ENCODE measurements at regions of chr17 and their contacts with region 1.

Region 1: DNA sequence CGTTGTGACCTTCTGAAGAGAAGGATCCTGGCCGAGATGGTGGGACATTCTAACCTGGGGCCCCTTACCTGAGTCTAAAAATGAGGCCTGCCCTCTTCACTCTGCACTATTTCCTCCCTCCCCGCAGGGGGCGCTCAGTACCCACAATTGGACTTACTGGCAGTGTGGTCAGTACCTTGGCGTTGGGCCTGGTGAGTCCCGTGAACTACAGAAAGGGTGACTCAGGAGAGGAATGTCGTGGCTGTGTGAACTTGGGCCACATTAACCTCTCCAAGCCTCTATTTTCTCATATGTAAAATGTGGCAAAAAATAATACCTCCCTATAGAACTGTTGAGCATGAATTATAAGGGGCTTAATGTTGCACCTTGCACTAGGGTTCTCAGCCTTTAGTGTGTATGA is 3.9 kb downstream of the RSAD1 start:
- DNase-seq: peak; percentile 97 to 98
- ATAC-seq: peak; percentile 90
- H3K4me3 ChIP-seq: no peak overlapping the region
- H3K27ac ChIP-seq: peak overlapping the region in 1 of 2 donors; percentile 67
- H3K4me1 ChIP-seq: no peaks in the 10 kb centered on the region
- H3K27me3 ChIP-seq: no peaks in the 10 kb centered on the region

Region 2: GRCh38 chr17:50541716-50542688 is 59.5 kb after region 1 on chr17:
- intact Hi-C with region 1: loop called (anchors 5 kb)
- DNase-seq: peak; percentile 89 to 95
- ATAC-seq: peak; percentile 89
- H3K4me3 ChIP-seq: peak overlapping the region; percentile 40 to 42
- H3K27ac ChIP-seq: no peak overlapping the region
- H3K4me1 ChIP-seq: no peaks in the 10 kb centered on the region
- H3K27me3 ChIP-seq: no peaks in the 10 kb centered on the region

Region 3: GRCh38 chr17:50626037-50626574 is 143.6 kb after region 1 on chr17:
- intact Hi-C with region 1: loop called (anchors 2 to 5 kb)
- DNase-seq: peak; percentile 85 to 93
- ATAC-seq: peak; percentile 73
- H3K4me3 ChIP-seq: no peak overlapping the region
- H3K27ac ChIP-seq: no peak overlapping the region
- H3K4me1 ChIP-seq: no peaks in the 10 kb centered on the region
- H3K27me3 ChIP-seq: no peaks in the 10 kb centered on the region

Region 4: DNA sequence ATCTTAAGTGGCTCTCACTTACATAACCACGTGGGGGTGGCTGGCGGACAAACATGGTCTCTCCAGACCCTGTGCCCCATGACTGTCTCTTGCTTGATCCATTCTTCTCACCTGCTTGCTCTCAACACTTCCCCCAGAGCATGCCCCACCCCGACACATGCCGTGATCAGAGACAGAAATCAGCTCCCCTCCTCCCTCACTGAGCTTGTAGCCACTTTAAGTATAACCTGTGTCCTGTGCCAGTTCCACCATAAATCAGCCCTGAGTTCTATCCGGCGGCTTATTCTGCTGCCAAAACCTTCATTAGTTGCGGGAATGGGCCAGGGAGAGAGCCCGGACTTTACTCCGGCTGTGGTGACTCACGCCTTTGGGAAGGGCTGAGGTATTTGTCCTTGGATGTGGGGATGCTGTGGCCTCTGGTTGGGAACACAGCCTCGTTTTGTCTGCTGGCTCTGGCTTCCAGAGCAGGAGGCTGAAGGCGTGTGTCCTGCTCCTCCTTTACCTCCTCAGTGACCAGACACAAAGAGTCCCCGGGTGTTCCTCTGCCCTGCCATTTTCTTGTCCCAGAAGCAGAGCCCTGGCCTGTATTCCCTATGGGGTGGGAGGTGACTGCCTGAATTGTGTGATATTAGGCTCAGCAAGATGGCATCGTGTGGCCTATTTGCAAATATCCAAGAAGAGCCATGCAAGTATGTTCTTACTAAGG is 204.1 kb after region 1 on chr17:
- intact Hi-C with region 1: loop called (anchors 5 kb)
- DNase-seq: peak; percentile 89 to 92
- ATAC-seq: peak; percentile 88
- H3K4me3 ChIP-seq: no peak overlapping the region
- H3K27ac ChIP-seq: peak overlapping the region; percentile 71 to 94
- H3K4me1 ChIP-seq: no peaks in the 10 kb centered on the region
- H3K27me3 ChIP-seq: no peaks in the 10 kb centered on the region

Region 5: GRCh38 chr17:50841949-50842354 is 359.4 kb after region 1 on chr17:
- intact Hi-C with region 1: loop called in 1 of 2 experiments (anchors 5 kb)
- DNase-seq: peak; percentile 71 to 91
- ATAC-seq: peak; percentile 79
- H3K4me3 ChIP-seq: no peak overlapping the region
- H3K27ac ChIP-seq: no peak overlapping the region
- H3K4me1 ChIP-seq: no peaks in the 10 kb centered on the region
- H3K27me3 ChIP-seq: no peaks in the 10 kb centered on the region

Region 6: DNA sequence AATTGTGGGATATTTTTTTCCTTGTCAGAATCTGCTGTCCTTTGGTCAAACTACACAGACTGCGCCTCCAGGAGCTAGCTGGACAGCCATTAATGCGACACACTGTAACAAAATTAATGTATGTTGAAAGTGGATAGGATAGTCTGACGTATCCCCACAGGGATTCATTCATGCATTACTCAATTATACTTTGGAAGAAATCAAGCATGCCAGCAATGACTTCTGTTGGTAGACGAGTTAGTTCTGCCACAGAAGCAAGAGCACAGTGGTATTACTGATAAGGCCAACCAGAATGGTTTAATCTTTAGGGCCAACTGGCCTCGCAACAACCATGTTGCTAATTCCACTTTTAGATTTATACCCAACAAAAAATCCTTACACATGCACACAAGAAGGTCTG is 490.1 kb after region 1 on chr17:
- intact Hi-C with region 1: loop called in 1 of 2 experiments (anchors 5 kb)
- DNase-seq: no peak
- ATAC-seq: no peak
- H3K4me3 ChIP-seq: no peak overlapping the region
- H3K27ac ChIP-seq: no peak overlapping the region
- H3K4me1 ChIP-seq: no peaks in the 10 kb centered on the region
- H3K27me3 ChIP-seq: no peaks in the 10 kb centered on the region

Measured in aorta (tissue), 5 donors.